Vagina (tissue), 2 donors: ENCODE measurements at regions of chr1 and their contacts with region 1.

Region 1: GRCh38 chr1:233719655-233720334 is 105.9 kb downstream of the KCNK1 start:
- DNase-seq: no peak
- H3K4me3 ChIP-seq: no peak overlapping the region
- H3K27ac ChIP-seq: no peak overlapping the region
- H3K4me1 ChIP-seq: no peaks in the 10 kb centered on the region
- H3K27me3 ChIP-seq: no peaks in the 10 kb centered on the region
- CTCF ChIP-seq: no peak
- POLR2A ChIP-seq: no peak

Region 2: GRCh38 chr1:233744779-233745513 is 25.2 kb after region 1 on chr1:
- intact Hi-C with region 1: loop called (anchors 2 kb)
- DNase-seq: no peak
- H3K4me3 ChIP-seq: no peak overlapping the region
- H3K27ac ChIP-seq: no peak overlapping the region
- H3K4me1 ChIP-seq: no peaks in the 10 kb centered on the region
- H3K27me3 ChIP-seq: no peaks in the 10 kb centered on the region
- CTCF ChIP-seq: no peak
- POLR2A ChIP-seq: no peak

Region 3: GRCh38 chr1:234743791-234744611 is 1024.2 kb after region 1 on chr1:
- intact Hi-C with region 1: no loop called
- DNase-seq: no peak
- H3K4me3 ChIP-seq: peak overlapping the region; percentile 5 to 32
- H3K27ac ChIP-seq: peak overlapping the region; percentile 63
- H3K4me1 ChIP-seq: peaks cover 9% of the 10 kb centered on the region
- H3K27me3 ChIP-seq: no peaks in the 10 kb centered on the region
- CTCF ChIP-seq: no peak
- POLR2A ChIP-seq: no peak